K562 (cell line): ENCODE measurements at regions of chr3 and their contacts with region 1.

Region 1: DNA sequence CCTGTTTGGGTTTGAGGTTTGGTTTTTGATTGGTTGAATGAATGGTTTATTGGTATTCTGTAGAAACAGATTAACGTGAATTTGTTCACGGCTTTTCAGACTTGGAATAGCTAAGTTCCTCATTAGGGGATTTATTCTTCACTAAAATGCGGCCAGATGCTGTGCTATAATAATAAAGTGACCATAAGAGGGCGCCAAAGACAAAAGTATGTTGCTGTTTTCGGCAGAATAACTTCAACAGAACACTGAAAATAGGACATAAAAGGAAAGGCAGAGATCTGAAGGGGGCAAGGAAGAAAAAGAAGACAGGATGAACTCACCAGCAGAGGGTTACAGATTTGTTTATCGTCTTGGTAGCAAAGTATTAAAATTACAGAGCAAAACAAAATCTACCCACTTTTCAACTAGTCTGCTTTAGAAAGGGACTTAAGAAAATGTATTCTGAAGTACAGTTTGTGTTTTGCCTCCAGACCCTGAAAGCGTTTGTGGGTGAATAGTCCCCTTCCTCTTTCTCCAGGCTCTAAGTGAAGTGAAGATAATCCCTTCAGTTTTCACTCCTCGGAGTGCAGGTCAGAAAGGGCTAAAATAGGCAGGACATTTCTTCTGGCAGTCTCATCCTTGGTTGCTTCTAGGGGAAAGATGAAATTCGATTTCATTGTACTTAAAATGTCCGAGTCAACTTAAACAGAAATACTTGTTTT is 147.6 kb downstream of the IL20RB start:
- DNase-seq: peak; percentile 17 to 57 (median 20)
- ATAC-seq: peak; percentile 84
- H3K4me3 ChIP-seq: no peak overlapping the region
- H3K27ac ChIP-seq: no peak overlapping the region
- H3K4me1 ChIP-seq: no peaks in the 10 kb centered on the region
- H3K27me3 ChIP-seq: no peaks in the 10 kb centered on the region
- CTCF ChIP-seq: peak; percentile 42 to 65 (median 53); a peak in 4 of 6 replicates
- EP300 ChIP-seq: no peak
- POLR2A ChIP-seq: no peak
- RAD21 ChIP-seq: peak; percentile 42 to 66

Region 2: DNA sequence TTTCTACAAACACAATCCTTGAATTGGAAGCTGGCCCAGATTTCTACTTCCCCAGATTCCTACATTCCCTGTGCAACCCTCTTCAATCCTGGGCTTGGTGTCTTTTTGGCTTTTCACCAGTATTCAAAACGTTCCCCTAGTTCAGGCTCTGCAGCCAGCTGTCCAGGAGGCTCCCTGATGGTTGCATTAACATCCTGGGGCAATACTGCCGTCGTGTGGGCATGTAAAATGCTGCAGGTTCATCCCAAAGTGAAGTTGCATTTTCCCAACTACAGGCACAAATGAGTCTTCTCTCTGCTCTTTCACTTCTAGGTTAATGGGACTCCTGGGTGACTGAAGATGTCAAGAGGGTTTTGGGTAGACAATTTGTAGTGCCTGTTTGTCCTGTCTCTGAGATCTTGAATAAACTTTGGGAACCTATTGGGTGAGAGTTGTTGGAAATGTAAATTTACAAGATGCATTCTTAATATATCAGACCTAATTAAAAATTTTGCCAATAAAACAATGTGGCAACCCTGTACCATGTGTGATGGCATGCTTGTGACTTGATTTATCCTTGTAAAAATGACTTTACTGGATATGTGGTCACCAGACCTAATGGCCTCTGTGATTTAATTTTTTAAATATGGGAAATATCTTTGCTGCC is 687.3 kb after region 1 on chr3:
- CTCF ChIA-PET with region 1: interaction called, 3 read pairs
- POLR2A ChIA-PET with region 1: no interaction called
- in situ Hi-C with region 1: no loop called
- intact Hi-C with region 1: loop called (anchors 2 kb)
- DNase-seq: peak; percentile 32 to 49 (median 38)
- ATAC-seq: peak; percentile 52; the same call in 1 of the 3 replicates
- H3K4me3 ChIP-seq: no peak overlapping the region
- H3K27ac ChIP-seq: no peak overlapping the region
- H3K4me1 ChIP-seq: no peaks in the 10 kb centered on the region
- H3K27me3 ChIP-seq: no peaks in the 10 kb centered on the region
- CTCF ChIP-seq: peak; percentile 38 to 51 (median 44); a peak in 4 of 6 replicates
- EP300 ChIP-seq: no peak
- POLR2A ChIP-seq: no peak
- RAD21 ChIP-seq: peak; percentile 54 to 67

Region 3: DNA sequence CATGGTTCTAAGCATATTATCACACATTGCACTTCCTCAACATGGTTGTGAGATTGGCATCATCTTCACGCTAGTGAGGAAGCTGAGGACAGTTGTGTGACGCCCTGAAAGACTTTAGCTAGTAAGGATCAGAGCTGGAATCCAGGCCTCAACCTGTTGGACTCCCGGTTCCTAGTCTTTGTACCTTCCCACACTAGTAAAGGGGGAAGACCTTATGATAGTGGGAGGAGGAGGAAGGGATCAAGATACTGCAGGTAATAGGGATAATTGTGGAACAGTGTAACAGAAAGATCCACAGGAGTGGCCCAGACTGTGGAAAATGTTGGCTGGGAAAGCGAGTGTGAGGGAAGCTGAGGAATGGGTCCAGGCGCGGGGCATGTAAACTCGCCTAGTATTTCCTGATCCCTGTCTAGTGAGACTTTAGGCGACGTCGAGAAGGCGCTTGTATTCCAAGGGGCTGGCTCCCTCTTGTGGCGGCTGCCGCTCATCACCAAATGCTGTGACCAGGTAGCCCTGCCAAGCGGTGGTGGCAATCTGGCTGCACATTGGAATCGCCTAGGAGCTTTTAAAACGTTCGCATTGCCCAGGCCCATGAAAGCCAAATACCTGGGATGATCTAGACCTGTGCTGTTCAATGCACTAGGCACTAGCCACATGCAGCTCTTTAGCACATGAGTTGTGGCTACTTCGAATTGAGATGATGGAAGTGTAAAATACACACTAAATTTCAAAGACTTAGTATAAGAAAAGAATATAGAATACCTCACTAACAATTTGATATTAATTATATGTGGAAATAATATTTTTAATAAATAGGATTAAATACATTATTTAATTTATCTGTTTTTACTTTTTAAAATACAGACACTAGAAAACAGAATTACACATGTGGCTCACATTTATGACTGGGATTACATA is 865.7 kb after region 1 on chr3:
- CTCF ChIA-PET with region 1: no interaction called
- POLR2A ChIA-PET with region 1: no interaction called
- in situ Hi-C with region 1: loop called (anchors 25 kb)
- intact Hi-C with region 1: loop called (anchors 1 kb)
- DNase-seq: peak; percentile 42 to 58 (median 52)
- ATAC-seq: peak; percentile 97
- H3K4me3 ChIP-seq: no peak overlapping the region
- H3K27ac ChIP-seq: no peak overlapping the region
- H3K4me1 ChIP-seq: no peaks in the 10 kb centered on the region
- H3K27me3 ChIP-seq: no peaks in the 10 kb centered on the region
- CTCF ChIP-seq: peak; percentile 66 to 82 (median 73)
- EP300 ChIP-seq: no peak
- POLR2A ChIP-seq: no peak
- RAD21 ChIP-seq: peak; percentile 43 to 70; a peak in 3 of 4 replicates